Calu3 (cell line): ENCODE measurements at regions of chr12 and their contacts with region 1.

Region 1: GRCh38 chr12:109753959-109754746 is 40.5 kb downstream of the FAM222A start:
- DNase-seq: no peak
- H3K4me3 Mint-ChIP-seq: no peak overlapping the region
- H3K27ac Mint-ChIP-seq: no peak overlapping the region
- H3K4me1 Mint-ChIP-seq: no peaks in the 10 kb centered on the region
- H3K27me3 Mint-ChIP-seq: peaks cover 13% of the 10 kb centered on the region
- CTCF ChIP-seq: no peak

Region 2: DNA sequence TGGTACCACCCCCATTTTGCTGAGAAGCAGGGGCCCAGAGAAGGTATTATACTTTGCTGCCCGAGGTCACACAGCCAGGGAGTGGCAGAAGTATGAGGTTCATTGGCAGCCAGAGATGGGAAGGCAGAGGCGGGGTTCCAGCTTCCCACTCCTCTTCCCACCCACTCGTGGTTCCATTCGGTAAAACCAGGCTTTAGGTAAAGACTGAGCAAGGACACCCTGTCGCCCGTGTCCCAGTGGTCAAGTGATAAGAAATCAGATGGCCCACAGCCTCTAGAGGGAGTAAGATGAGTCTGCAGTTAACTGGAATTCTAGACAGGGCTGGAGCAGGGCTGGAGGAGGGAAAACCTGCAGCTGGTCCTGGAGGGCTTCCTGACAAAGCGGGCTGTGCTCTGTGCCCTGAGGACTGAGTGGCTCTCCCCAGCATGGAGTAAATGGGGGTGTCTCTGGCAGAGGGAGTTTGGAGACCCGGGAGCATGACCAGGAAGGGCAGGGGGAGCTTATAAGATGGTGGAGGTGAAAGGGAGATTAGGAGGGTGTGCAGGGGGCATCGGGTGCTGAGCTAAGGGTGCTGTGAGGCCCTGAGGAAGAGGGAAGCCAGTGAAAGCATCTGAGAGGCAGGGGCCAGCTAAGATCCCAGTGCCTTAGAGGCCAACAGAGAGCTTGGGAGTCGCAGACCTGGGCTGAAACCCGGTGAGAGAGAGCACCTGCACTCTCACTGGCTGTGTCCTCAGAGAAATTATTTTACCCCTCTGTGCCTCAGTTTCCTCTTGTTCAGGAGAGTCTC is 34.7 kb before region 1 on chr12:
- CTCF ChIA-PET with region 1: no interaction called
- intact Hi-C with region 1: loop called (anchors 2 kb)
- DNase-seq: no peak
- H3K4me3 Mint-ChIP-seq: no peak overlapping the region
- H3K27ac Mint-ChIP-seq: no peak overlapping the region
- H3K4me1 Mint-ChIP-seq: peaks cover 8% of the 10 kb centered on the region
- H3K27me3 Mint-ChIP-seq: peaks cover 30% of the 10 kb centered on the region
- CTCF ChIP-seq: no peak

Region 3: DNA sequence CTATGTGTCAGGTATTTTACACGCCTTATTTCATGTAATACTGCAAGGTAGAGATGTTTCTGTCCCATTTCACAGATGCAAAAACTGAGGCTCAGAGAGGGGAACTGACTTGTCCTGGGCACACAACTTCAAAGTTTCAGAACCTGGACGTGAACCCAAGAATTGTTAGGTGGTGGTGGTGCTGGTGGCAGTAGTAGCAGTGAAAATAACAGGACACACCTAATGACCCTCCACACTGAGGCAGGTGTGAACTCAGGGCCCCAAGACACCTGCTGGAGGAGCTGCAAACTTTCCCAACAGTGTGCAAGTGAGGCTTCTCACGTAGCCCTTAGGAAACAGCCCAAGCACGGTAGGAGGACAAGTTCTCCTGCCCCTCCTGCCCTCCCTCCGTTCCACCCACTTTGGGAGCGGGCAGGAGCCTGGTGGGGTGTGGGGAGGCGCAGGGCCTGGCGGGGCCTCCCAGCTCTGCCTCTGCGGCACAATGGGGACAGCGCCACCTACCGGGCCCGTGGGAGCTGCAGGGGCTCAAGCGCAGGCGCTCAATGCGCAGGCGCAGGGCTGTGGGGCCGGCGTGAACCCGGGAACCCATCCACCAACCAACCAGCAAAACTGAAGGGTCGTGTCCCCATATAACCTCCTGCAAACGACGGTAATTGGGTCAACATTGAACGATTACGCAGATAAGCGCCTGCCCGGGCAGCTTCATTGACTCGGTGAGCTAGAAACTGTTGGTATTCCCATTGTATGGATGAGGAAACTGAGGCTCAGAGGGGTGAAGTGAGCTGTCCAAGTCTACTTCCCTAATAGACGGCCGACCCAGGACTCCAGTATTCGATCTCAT is 91.0 kb after region 1 on chr12:
- CTCF ChIA-PET with region 1: no interaction called
- intact Hi-C with region 1: no loop called
- DNase-seq: peak; percentile 98
- H3K4me3 Mint-ChIP-seq: peak overlapping the region; percentile 28
- H3K27ac Mint-ChIP-seq: no peak overlapping the region
- H3K4me1 Mint-ChIP-seq: peaks cover 15% of the 10 kb centered on the region
- H3K27me3 Mint-ChIP-seq: no peaks in the 10 kb centered on the region
- CTCF ChIP-seq: peak; percentile 97